Left colon (tissue), 2 donors: ENCODE measurements at regions of chr6 and their contacts with region 1.

Region 1: DNA sequence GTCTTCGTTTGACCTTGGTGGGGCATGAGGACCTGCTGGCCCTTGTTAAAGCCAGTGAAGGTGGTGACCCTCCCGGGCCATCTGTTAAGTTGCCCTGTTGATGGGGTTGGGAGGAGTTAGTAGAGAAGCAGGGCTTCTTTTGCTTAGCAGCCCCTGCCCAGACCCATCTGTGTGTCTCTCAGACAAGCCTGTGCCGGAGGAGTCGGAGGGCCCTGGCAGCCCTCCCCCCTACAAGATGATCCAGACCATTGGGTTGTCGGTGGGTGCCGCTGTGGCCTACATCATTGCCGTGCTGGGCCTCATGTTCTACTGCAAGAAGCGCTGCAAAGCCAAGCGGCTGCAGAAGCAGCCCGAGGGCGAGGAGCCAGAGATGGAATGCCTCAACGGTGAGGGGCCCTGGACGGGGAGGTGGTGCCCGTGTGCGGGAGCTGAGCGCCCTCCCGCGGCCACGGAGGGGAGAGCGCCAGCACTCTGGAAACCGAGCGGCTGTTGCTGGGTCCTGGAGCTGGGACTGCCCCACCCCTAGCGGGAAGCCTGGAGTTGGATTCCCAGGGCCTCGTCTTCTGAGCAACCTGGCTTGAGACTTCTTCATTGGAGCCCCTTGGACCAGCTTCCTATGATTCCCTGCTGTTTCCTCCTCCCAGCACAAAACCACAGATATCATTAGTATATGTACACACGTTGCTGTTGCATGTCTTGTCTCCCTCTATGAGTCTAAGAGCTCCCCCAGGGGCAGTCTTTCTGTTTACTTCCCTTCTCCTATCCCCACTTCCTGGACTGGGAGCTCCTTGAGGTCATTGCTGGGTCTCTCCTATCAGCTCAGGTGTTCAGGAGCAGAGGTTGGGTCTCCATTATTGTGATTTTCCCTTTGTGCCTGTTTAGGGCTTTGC is 27.6 kb upstream of the SRF start:
- DNase-seq: peak; percentile 78 to 83
- ATAC-seq: peak; percentile 99

Region 2: GRCh38 chr6:42915732-42916131 is 227.7 kb before region 1 on chr6 and contains the start of gene PTCRA:
- intact Hi-C with region 1: no loop called
- DNase-seq: no peak
- ATAC-seq: no peak
- total RNA-seq, gene PTCRA: not detected

Region 3: DNA sequence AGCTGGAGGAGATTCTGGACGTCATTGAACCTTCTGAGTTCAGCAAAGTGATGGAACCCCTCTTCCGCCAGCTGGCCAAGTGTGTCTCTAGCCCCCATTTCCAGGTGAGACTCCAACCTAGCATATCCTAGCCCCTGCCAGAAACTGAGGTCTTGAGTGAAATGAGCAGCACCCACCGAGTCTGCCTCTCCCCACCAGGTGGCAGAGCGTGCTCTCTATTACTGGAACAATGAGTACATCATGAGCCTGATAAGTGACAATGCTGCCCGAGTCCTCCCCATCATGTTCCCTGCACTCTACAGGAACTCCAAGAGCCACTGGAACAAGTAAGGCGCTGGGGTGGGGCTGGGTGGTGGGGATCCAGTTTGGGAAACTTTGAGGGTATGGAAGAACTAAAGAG is 134.4 kb before region 1 on chr6:
- intact Hi-C with region 1: loop called in 1 of 2 experiments (anchors 10 kb)
- DNase-seq: peak in 1 of 2 donors; percentile 52
- ATAC-seq: no peak

Region 4: GRCh38 chr6:43274916-43275597 is 131.6 kb after region 1 on chr6:
- intact Hi-C with region 1: no loop called
- DNase-seq: peak; percentile 72 to 86
- ATAC-seq: peak; percentile 42